GM13976 (cell line): ENCODE measurements at regions of chr17 and their contacts with region 1.

Region 1: GRCh38 chr17:77247048-77247541 is 106.3 kb downstream of the SEC14L1 start:
- DNase-seq: peak; percentile 94
- CTCF ChIP-seq: peak; percentile 92

Region 2: GRCh38 chr17:76696763-76697701 is 550.1 kb before region 1 on chr17:
- in situ Hi-C with region 1: no loop called
- DNase-seq: peak; percentile 66
- CTCF ChIP-seq: no peak

Region 3: GRCh38 chr17:77096570-77097214 is 150.4 kb before region 1 on chr17:
- in situ Hi-C with region 1: loop called (anchors 5 kb)
- DNase-seq: no peak
- CTCF ChIP-seq: peak; percentile 29

Region 4: DNA sequence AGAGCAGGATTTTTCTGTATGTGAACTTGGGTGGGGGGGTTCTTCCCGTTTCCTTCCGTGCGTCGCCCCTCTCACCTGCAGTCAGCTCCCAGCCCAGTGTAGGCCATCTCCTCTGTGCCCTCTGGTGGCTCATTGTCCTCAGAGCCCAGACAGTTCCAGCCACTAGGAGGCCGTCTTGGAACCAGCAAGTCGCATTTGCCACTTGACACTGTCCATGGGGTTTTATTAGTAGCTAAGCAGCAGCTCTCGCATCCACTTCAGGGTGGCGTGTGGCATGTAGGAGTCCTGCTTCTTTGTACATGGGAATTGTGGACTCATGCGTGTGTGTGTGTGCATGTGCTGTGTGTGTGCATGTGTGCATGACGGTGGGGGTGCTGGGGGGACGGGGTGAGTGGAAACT is 32.4 kb before region 1 on chr17:
- in situ Hi-C with region 1: no loop called
- DNase-seq: no peak
- CTCF ChIP-seq: no peak